ENCODE measurements at regions of chr3 and their contacts with region 1.

Region 1: DNA sequence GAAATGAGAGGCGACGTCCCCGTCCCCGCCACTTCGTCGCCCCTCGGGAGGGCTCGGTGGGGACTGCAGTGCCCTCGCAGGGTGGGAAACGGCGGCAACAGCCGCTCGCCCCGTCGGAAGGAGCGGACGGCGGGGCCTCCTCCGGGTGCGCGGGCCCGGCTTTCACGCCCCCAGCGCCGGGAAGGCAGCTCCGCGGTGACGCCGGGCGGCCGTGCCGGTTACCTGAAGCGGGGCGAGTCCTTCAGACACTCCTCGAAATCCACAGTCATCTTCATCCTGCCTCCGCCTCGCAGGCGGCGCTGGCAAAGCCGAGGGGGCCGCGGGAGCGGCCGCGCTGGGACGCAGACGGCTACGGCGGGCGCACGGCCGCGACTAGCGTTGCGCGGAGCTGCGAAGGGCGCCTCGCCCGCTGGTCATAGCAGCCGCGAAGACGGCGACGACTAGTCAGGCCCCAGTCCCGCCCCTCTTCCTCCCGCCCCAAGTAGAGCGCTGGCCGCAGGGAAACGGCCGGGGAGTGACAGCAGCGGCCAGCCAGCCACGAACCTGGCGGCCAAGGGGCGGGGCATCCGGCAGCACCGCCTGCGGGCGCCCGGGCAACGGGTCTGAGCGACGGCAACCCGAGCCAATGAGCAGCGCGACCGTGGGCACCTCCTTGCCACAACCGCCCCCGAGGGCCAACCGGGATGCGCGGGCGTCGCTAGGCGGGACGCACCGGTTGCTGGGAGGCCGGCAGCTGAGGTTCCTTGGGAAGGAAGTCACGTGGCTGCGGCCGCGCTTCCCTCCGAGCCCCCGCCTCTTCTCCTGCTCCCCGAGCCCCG is at the start of gene ACAP2:
- DNase-seq: peak; percentile 99
- H3K4me3 Mint-ChIP-seq: peak within 1 kb of the TSS; percentile 93
- H3K27ac Mint-ChIP-seq: peak within 1 kb of the TSS; percentile 89
- H3K4me1 Mint-ChIP-seq: peaks cover 45% of the 10 kb centered on the region
- H3K27me3 Mint-ChIP-seq: no peaks in the 10 kb centered on the region
- total RNA-seq, gene ACAP2: 37.9 to 42.1 TPM

Region 2: DNA sequence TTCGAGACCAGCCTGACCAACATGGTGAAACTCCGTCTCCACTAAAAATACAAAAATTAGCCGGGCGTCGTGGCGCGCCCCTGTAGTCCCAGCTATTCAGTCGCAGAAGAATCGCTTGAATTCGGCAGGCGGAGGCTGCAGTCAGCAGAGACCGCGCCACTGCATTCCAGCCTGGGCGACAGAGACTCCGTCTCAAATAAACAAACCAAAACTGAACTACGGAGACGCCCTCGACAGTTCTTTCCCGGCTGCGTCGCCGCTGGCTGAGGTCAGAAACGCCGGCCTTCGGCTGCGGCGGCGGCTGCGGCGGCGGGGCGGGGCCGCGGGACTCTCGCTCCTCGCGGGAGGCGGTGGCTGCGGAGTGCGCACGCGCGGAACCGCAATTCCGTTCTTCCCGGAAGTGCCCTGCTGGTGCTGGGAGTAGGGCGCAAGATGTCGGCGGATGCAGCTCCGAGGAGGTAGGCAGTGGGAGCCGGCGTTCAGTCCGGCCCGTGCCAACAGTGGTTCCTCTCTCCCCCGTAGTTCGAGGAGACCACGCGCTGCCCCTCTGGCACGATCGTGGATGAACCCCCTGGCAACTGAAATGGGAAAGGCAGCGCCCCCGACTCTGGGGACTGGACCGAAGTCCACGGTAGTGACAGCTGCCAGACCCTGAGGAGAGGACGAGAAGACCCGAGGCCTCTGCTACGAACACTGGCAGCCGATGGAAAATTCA is 859.0 kb before region 1 on chr3:
- CTCF ChIA-PET with region 1: no interaction called
- intact Hi-C with region 1: loop called (anchors 2 kb)
- DNase-seq: peak; percentile 94
- H3K4me3 Mint-ChIP-seq: peak overlapping the region; percentile 94
- H3K27ac Mint-ChIP-seq: peak overlapping the region; percentile 94
- H3K4me1 Mint-ChIP-seq: peaks cover 19% of the 10 kb centered on the region
- H3K27me3 Mint-ChIP-seq: no peaks in the 10 kb centered on the region

Region 3: DNA sequence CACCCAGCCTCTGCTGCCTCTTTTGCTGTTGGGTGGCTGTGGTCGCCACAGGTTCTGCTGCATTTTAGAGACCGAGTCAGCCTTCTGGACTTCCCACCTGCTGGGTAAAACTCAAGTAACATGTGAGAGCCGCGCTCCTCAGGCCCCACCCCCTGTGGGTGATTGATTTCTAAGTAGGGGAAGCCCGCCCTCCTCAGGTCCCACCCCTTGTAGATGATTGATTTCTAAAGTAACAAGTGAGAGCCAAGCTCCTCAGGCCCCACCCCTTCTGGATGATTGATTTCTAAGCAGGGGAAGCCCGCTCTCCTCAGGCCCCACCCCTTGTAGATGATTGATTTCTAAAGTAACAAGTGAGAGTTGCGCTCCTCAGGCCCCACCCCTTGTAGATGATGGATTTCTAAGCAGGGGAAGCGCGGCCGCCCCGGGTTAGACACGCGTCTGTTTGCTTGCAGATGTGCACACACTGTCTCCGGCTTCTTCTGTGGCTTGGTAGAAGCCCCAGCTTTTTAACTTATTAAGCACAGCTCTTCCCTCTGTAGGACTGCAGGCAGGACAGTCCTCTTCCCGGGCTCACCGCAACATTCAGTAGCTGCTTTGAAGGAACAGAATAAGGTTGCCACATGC is 673.6 kb before region 1 on chr3:
- CTCF ChIA-PET with region 1: no interaction called
- intact Hi-C with region 1: loop called (anchors 1 kb)
- DNase-seq: peak; percentile 99
- H3K4me3 Mint-ChIP-seq: peak overlapping the region; percentile 70
- H3K27ac Mint-ChIP-seq: peak overlapping the region; percentile 66
- H3K4me1 Mint-ChIP-seq: peaks cover 11% of the 10 kb centered on the region
- H3K27me3 Mint-ChIP-seq: no peaks in the 10 kb centered on the region

Region 4: GRCh38 chr3:195307711-195308110 is 135.1 kb before region 1 on chr3:
- CTCF ChIA-PET with region 1: no interaction called
- intact Hi-C with region 1: no loop called
- DNase-seq: no peak
- H3K4me3 Mint-ChIP-seq: no peak overlapping the region
- H3K27ac Mint-ChIP-seq: no peak overlapping the region
- H3K4me1 Mint-ChIP-seq: no peaks in the 10 kb centered on the region
- H3K27me3 Mint-ChIP-seq: no peaks in the 10 kb centered on the region

Region 5: DNA sequence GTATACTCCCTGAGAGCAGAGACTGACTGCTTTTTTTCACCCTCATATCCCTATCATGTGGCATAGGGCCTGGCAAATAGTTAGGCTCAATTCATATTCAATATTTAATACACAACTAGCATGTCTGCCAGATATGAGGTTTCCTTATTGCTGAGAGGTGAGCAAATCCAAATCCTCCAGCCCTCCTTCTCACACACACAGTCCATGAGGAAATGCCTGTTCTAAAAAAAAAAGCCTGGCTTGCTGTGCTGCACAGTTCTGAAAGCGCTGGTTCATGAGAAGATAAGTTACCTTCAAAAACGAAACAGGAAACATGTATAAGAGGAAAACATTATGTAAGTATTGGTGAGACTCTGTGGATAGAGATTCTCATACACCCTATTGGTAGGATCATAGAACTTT is 15.5 kb after region 1 on chr3:
- CTCF ChIA-PET with region 1: interaction called, 5 read pairs
- intact Hi-C with region 1: loop called (anchors 1 kb)
- DNase-seq: no peak
- H3K4me3 Mint-ChIP-seq: peak overlapping the region; percentile 22
- H3K27ac Mint-ChIP-seq: no peak overlapping the region
- H3K4me1 Mint-ChIP-seq: peaks cover 20% of the 10 kb centered on the region
- H3K27me3 Mint-ChIP-seq: no peaks in the 10 kb centered on the region

Region 6: GRCh38 chr3:195542698-195543499 is 100.1 kb after region 1 on chr3 and contains the start of gene PPP1R2:
- CTCF ChIA-PET with region 1: no interaction called
- intact Hi-C with region 1: loop called (anchors 1 kb)
- DNase-seq: peak; percentile 93
- H3K4me3 Mint-ChIP-seq: peak within 1 kb of the TSS; percentile 88
- H3K27ac Mint-ChIP-seq: peak within 1 kb of the TSS; percentile 94
- H3K4me1 Mint-ChIP-seq: peaks cover 53% of the 10 kb centered on the region
- H3K27me3 Mint-ChIP-seq: no peaks in the 10 kb centered on the region
- total RNA-seq, gene PPP1R2: 99.7 to 105 TPM

Region 7: GRCh38 chr3:196502775-196503195 is 1060.0 kb after region 1 on chr3:
- CTCF ChIA-PET with region 1: no interaction called
- intact Hi-C with region 1: loop called (anchors 10 kb)
- DNase-seq: peak; percentile 77
- H3K4me3 Mint-ChIP-seq: peak overlapping the region; percentile 88
- H3K27ac Mint-ChIP-seq: peak overlapping the region; percentile 93
- H3K4me1 Mint-ChIP-seq: peaks cover 33% of the 10 kb centered on the region
- H3K27me3 Mint-ChIP-seq: no peaks in the 10 kb centered on the region

Measured in activated naive CD4-positive, alpha-beta T cell treated with anti-CD3 and anti-CD28 coated beads for 36 hours (primary cell).